ENCODE measurements at regions of chr2 and their contacts with region 1.

Region 1: DNA sequence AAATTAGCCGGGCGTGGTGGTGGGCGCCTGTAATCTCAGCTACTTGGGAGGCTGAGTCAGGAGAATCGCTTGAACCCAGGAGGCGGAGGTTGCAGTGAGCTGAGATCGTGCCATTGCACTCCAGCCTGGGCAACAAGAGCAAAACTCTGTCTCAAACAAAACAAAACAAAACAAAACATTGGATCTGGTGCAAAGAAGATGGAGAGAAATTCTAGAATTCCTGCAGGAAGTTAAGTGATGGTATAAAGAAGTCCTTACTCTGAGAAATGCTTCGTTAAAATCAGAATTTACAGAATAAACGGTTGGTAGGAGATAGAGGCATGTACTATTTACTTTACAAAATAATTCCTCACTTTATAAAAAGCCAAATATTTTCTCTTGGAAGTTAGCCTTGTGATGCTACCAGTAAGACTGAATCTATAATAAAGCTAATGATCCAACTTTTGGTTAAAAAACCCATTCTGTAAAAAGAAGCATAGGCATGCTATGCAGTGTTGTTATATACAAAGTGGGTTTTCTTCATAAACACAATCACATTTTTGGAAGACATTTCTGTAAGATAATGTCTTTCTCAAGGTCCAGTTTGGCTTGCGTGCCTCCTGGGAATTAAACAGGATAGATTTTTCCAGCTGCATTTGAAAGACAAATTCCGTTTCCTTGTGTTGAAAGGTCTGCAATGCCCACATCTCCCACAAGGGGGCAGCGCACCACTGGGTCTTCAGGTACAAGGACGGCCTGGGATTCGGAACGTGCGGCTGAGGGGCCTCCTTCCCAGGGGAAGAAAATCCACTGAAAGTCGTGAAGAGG is 35.6 kb upstream of the PNO1 start:
- DNase-seq: peak; percentile 87 to 89
- H3K4me3 ChIP-seq: no peak overlapping the region
- H3K27ac ChIP-seq: no peak overlapping the region
- H3K4me1 ChIP-seq: no peaks in the 10 kb centered on the region
- H3K27me3 ChIP-seq: no peaks in the 10 kb centered on the region
- CTCF ChIP-seq: peak; percentile 91 to 93 (median 92)
- POLR2A ChIP-seq: no peak

Region 2: GRCh38 chr2:68441179-68441993 is 319.3 kb after region 1 on chr2:
- intact Hi-C with region 1: loop called (anchors 5 kb)
- DNase-seq: peak; percentile 76 to 87
- H3K4me3 ChIP-seq: no peak overlapping the region
- H3K27ac ChIP-seq: peak overlapping the region; percentile 39 to 52
- H3K4me1 ChIP-seq: no peaks in the 10 kb centered on the region
- H3K27me3 ChIP-seq: no peaks in the 10 kb centered on the region
- CTCF ChIP-seq: peak; percentile 81 to 90 (median 86)
- POLR2A ChIP-seq: no peak

Measured in uterus (tissue), 4 donors.